ENCODE measurements at regions of chr6 and their contacts with region 1.

Region 1: DNA sequence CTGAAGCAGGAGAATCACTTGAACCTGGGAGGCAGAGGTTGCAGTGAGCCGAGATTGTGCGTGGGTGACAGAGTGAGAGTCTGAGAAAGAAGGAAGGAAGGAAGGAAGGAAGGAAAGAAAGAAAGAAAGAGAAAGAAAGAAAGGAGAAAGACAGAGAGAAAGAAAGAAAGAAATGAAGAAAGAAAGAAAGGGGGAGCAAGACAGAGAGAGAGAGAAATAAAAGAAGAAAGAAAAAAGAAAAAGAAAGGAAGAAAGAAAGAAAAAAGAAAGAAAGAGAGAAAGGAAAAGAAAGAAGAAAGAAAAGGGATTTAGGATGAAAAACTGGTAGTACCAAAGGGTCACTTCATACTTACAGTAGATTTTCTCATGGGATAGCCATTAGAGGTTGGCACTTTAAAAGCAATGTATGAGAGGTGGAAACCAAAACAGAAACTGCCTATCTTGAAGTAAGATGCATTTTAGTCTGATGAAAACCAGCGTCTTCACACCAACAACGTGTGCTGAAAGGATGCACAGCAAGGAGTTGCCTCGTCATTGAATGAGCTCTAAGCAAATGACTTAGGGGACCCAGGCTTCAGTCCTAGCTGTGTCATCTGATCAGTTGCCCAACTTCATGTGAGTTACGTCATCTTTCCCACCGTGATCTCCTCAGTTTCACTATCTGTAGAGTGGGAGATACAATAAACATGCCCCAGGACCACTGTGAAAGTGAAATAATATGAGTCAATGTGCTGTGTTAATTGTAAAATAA is 133.9 kb upstream of the NEDD9 start:
- DNase-seq: no peak
- H3K4me3 ChIP-seq: no peak overlapping the region
- H3K27ac ChIP-seq: peak overlapping the region; percentile 78 to 87
- H3K4me1 ChIP-seq: peaks cover 4 to 16% of the 10 kb centered on the region in 2 donors
- H3K27me3 ChIP-seq: no peaks in the 10 kb centered on the region
- CTCF ChIP-seq: no peak

Region 2: GRCh38 chr6:11194356-11195218 is 171.8 kb before region 1 on chr6:
- intact Hi-C with region 1: loop called (anchors 5 kb)
- DNase-seq: peak in 1 of 2 donors; percentile 79
- H3K4me3 ChIP-seq: peak overlapping the region in 1 of 2 donors; percentile 4
- H3K27ac ChIP-seq: peak overlapping the region; percentile 70 to 83
- H3K4me1 ChIP-seq: peaks cover 6 to 50% of the 10 kb centered on the region in 2 donors
- H3K27me3 ChIP-seq: no peaks in the 10 kb centered on the region
- CTCF ChIP-seq: no peak

Region 3: DNA sequence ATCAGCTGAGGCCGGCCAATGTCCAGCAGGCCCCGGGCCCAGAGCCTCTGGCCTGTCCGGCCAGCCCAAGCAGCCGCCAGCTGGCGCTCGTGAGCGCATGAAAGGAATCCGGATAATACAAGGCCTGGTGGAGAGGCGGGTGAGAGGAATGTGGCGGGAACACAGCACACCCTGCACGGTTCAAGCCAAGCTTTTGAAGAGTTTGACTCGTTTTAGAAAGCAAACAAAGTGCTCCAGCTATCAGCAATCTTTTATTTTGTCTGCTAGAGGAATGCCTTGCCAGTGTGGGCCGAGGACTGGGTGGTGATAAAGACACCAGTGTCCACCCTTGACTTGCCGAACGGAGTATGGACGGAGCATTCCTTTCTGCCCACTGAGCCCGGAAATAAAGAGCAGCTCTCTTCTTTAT is 124.6 kb before region 1 on chr6:
- intact Hi-C with region 1: loop called (anchors 5 kb)
- DNase-seq: peak in 1 of 2 donors; percentile 88
- H3K4me3 ChIP-seq: no peak overlapping the region
- H3K27ac ChIP-seq: peak overlapping the region; percentile 37 to 61
- H3K4me1 ChIP-seq: peaks cover 11 to 34% of the 10 kb centered on the region in 2 donors
- H3K27me3 ChIP-seq: no peaks in the 10 kb centered on the region
- CTCF ChIP-seq: peak; percentile 82 to 96 (median 88)

Region 4: DNA sequence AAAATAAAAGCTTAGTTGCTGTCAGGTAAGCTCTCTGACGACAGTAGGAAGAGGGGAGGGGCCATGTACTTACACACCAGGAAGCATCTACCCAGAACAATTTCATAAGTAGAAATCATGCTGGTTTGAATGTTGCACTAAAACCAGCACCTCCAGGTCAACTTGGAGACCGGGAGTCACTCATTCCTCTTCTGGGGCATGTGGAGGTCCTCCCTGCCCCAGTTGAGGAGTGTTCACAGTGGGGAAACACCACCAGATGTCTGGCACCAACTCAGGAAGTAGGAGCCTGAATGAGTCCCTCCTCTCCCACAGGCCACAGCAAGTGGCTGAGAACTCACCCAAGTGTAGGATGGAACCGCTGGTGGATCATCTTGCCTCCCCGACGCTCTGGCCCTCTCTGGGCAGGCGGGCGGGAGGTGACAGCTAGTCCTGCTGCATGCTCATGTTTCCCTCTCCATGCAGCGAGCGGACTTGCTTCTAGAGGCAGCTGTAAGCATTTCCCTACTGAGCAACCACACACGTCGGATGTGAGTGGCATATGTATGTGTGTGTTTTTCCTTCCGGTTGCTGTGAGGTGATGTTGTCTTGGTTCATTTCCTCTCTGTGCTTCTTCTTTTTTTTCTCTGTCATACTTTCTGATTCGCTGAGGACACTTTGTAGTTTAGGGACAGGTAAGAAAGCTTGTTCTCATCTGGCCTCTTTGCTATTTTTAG is 15.6 kb after region 1 on chr6:
- intact Hi-C with region 1: no loop called
- DNase-seq: no peak
- H3K4me3 ChIP-seq: peak overlapping the region in 1 of 2 donors; percentile 15
- H3K27ac ChIP-seq: no peak overlapping the region
- H3K4me1 ChIP-seq: peaks cover 0 to 3% of the 10 kb centered on the region in 2 donors
- H3K27me3 ChIP-seq: no peaks in the 10 kb centered on the region
- CTCF ChIP-seq: no peak

Region 5: GRCh38 chr6:11434565-11435326 is 68.4 kb after region 1 on chr6:
- intact Hi-C with region 1: loop called (anchors 2 kb)
- DNase-seq: peak in 1 of 2 donors; percentile 91
- H3K4me3 ChIP-seq: no peak overlapping the region
- H3K27ac ChIP-seq: peak overlapping the region; percentile 83 to 92
- H3K4me1 ChIP-seq: peaks cover 12 to 58% of the 10 kb centered on the region in 2 donors
- H3K27me3 ChIP-seq: no peaks in the 10 kb centered on the region
- CTCF ChIP-seq: no peak